ENCODE measurements at regions of chr22 and their contacts with region 1.

Region 1: GRCh38 chr22:31345331-31346254 is 553 bp downstream of the PATZ1 start:
- DNase-seq: peak; percentile 97
- H3K4me3 Mint-ChIP-seq: peak overlapping the region; percentile 93
- H3K27ac Mint-ChIP-seq: peak overlapping the region; percentile 92
- H3K4me1 Mint-ChIP-seq: peaks cover 37% of the 10 kb centered on the region
- H3K27me3 Mint-ChIP-seq: no peaks in the 10 kb centered on the region

Region 2: DNA sequence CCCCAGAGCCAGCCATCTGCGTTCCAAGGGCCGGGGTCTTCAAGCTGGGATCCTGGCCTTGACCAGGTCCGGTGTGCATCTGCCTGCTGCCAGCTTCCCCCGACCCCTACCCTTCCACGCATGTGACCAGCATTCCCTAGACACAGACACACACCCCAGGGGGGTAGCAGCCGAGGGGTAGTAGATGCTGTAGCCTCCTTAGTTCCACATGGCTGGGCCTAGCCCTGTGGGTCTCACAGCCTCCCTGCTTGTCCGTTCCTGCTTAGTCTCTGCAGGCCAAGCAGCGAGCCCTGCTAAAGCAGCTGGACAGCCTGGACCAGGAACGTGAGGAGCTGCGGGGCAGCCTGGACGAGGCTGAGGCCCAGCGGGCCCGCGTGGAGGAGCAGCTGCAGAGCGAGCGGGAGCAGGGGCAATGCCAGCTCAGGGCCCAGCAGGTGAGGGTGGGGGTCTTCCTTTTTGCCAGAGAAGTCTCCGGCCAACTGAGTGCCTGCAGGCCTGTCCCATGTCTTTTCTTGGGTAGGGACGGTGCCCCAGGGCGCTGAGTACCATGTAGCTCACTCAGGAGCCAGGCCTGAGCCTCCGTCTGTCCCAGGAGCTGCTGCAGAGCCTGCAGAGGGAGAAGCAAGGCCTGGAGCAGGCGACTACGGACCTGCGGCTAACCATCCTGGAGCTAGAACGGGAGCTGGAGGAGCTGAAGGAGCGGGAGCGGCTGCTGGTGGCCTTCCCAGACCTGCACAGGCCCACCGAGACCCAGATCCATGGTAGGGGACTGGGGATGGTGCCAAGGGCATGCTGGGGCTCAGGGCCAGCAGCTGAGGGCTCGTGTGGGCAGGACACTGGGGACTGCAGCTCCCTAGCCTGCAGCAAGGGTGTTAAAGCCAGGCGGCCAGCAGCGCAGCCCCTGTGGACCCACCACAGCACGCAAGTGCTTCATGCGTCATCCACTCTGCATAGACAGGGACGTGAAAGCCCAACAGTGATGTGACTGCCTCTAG is 972.0 kb before region 1 on chr22:
- intact Hi-C with region 1: no loop called
- DNase-seq: no peak
- H3K4me3 Mint-ChIP-seq: no peak overlapping the region
- H3K27ac Mint-ChIP-seq: no peak overlapping the region
- H3K4me1 Mint-ChIP-seq: no peaks in the 10 kb centered on the region
- H3K27me3 Mint-ChIP-seq: no peaks in the 10 kb centered on the region

Region 3: DNA sequence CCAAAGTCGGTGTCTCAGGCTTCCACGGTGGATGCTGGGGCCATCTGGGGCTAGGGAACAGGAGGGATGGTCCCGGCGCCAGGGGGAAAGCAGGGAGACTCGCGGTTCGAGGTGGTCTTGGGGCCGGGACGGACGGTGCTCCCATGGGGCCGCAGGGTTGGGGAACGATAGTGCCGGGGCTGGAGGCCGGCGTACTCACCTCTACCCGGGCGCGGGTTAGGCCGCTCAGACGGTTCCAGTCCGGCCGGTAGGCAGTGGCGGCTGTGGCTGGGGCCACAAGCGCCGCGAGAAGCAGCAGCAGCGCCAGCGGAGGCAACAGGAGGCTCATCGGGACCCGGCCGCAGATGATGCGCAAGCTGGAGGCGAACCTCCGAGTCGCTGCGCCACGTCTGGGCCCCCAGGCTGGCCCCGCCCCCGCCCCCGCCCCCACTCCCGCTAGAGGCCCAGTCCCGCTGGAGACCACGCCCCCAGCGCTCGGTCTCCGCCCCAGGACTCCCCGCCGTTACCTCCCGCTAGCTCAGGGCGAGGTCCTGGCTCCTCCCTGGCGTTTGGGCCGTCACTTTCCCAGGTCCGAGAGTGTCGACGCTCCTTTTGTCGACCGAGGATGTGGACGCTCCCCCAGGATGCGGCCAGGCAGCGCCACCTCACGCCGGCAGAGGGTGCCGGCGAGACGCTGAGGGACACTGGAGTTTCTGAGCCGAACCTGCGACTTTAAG is 238.3 kb before region 1 on chr22 and contains the start of gene SELENOM:
- intact Hi-C with region 1: loop called (anchors 1 kb)
- DNase-seq: peak; percentile 97
- H3K4me3 Mint-ChIP-seq: peak within 1 kb of the TSS; percentile 87
- H3K27ac Mint-ChIP-seq: peak within 1 kb of the TSS; percentile 55
- H3K4me1 Mint-ChIP-seq: peaks cover 12% of the 10 kb centered on the region
- H3K27me3 Mint-ChIP-seq: peaks cover 2% of the 10 kb centered on the region
- total RNA-seq, gene SELENOM: 7.4 and 8.2 TPM in 2 replicates

Region 4: GRCh38 chr22:31286360-31287255 is 59.0 kb before region 1 on chr22:
- intact Hi-C with region 1: no loop called
- DNase-seq: peak; percentile 91
- H3K4me3 Mint-ChIP-seq: peak overlapping the region; percentile 56
- H3K27ac Mint-ChIP-seq: peak overlapping the region; percentile 92
- H3K4me1 Mint-ChIP-seq: peaks cover 65% of the 10 kb centered on the region
- H3K27me3 Mint-ChIP-seq: no peaks in the 10 kb centered on the region

Region 5: DNA sequence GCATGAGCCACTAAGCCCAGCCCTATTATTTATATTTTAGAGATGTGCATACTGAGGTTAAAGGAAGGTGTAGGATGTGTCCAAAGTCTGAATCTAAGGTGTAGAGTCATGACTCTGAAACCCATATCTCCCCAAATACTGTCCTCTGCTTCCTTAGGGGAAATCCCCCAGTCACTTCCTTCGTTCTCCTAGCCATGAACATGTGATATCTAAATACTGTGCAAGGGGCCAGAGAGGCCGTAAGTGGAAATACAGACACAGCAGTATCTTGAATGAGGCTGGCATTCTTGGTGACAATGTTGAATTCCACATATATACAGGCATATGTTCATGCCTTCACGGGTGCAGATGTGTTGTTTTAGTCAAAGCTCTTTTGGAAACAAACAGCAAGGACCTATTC is 21.8 kb after region 1 on chr22:
- intact Hi-C with region 1: no loop called
- DNase-seq: no peak
- H3K4me3 Mint-ChIP-seq: no peak overlapping the region
- H3K27ac Mint-ChIP-seq: no peak overlapping the region
- H3K4me1 Mint-ChIP-seq: no peaks in the 10 kb centered on the region
- H3K27me3 Mint-ChIP-seq: no peaks in the 10 kb centered on the region

Region 6: DNA sequence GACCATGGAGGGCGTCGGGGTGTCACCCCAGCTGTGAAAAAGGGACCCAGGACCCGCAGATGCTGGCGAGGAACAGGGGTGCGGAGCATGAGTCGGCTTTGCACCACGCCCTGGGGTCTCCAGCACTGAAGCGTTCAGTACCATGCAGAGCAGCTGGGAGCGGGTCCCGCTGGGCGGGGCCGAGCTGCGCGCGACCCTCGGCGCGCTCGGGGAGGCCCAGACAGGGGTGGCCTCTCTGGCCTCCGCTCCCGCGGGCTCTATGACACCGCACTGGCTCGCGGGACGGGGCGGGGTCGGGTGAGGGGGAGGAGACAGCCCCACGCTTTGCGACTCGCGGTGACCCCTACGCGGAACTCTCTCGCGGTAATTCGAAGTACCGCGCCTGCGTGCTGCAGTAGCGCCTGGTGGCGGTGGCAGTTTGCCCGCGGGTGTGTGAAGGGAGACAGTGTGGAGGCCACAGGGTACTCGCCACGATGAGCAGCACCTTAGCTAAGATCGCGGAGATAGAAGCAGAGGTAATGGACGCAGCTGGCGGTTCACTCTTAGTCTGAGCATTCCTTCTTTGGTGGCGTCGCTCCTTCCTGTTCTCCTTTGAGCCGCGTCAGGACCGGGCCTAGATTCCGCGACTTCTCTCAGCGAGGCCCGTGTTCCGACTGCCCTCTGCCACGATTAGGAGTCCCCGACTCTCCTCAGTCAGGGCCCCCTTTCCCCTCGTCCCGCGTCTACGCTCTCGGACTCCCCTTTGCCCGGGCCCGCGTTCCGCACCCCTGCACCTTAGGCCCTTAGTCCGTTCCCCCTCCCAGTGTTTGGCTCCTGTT is 53.8 kb after region 1 on chr22 and contains the start of gene DRG1:
- intact Hi-C with region 1: loop called (anchors 1 kb)
- DNase-seq: peak; percentile 99
- H3K4me3 Mint-ChIP-seq: peak within 1 kb of the TSS; percentile 100
- H3K27ac Mint-ChIP-seq: peak within 1 kb of the TSS; percentile 94
- H3K4me1 Mint-ChIP-seq: peaks cover 16% of the 10 kb centered on the region
- H3K27me3 Mint-ChIP-seq: peaks cover under 1% of the 10 kb centered on the region
- total RNA-seq, gene DRG1: 114 and 117 TPM in 2 replicates

Region 7: DNA sequence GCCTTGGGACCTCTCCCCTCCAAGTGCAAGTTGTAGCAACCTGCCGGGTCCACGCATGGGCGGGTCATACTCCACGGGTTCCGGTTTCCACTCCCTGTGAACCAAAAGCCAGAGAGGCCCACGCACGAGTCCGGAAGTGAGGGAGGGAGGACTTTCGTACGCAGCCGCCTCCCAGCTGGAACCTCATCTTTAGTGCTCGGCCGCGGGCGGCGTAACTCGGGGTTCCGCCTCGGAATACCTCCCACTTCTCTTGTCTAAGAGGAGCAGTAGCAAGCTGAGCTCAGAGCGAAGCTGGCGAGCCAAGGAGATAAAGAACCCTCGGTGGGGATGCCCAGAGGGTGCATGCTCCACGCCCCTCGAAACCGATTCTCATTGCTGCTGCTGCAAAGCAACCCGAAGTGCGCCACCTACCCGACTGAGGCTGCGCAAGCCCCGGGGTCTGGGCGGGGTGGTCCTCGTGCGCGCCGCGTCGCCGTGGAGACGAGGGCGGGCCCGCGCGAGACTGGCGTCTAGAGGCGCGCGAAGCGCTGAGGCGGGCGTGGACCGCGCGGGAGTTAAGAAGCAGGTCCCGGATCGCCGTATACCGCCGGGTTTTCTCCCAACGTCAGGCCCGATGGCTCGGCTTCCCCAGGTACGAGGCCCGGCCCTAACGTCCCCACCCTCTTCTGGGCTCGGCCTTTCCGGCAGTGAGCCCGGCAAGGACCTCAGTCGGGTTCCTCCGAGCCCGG is 150.6 kb after region 1 on chr22 and contains the start of gene SFI1:
- intact Hi-C with region 1: loop called (anchors 2 kb)
- DNase-seq: peak; percentile 99
- H3K4me3 Mint-ChIP-seq: peak within 1 kb of the TSS; percentile 90
- H3K27ac Mint-ChIP-seq: peak within 1 kb of the TSS; percentile 93
- H3K4me1 Mint-ChIP-seq: peaks cover 36% of the 10 kb centered on the region
- H3K27me3 Mint-ChIP-seq: no peaks in the 10 kb centered on the region
- total RNA-seq, gene SFI1: 321 and 352 TPM in 2 replicates

Measured in activated CD4-positive, alpha-beta T cell treated with anti-CD3 and anti-CD28 coated beads, Interleukin-2, amount 10 ng/mL, durations not matched to agents 24 days and 14 days (primary cell).